ENCODE measurements at regions of chr18 and their contacts with region 1.

Region 1: DNA sequence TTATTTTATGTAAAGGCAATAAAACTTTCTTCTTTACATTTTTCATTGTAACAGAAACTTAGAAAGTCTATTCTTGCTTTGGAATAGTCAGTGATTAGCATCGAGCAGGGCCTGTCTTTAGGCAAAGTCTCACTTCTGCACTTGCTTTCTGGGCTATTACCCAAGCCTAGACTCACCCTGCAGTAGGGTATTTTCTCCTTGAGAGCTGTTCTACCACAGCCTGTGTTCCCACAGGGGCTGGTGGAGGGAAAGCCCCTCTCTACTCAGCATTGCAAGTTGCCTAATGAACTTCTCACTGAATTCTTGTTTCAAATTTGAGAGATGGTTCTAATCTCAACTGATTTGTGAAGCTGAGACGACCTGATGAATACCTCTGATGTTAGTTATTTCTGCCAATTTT is 111.7 kb upstream of the KLHL14 start:
- DNase-seq: peak; percentile 87
- ATAC-seq: peak; percentile 99
- H3K4me3 ChIP-seq: no peak overlapping the region
- H3K4me3 Mint-ChIP-seq: peak overlapping the region; percentile 71
- H3K27ac ChIP-seq: peak overlapping the region; percentile 78 to 79
- H3K27ac Mint-ChIP-seq: peak overlapping the region; percentile 88
- H3K4me1 ChIP-seq: peaks cover 68 to 70% of the 10 kb centered on the region in 2 donors
- H3K4me1 Mint-ChIP-seq: peaks cover 76% of the 10 kb centered on the region
- H3K27me3 ChIP-seq: no peaks in the 10 kb centered on the region
- H3K27me3 Mint-ChIP-seq: no peaks in the 10 kb centered on the region
- CTCF ChIP-seq: no peak

Region 2: DNA sequence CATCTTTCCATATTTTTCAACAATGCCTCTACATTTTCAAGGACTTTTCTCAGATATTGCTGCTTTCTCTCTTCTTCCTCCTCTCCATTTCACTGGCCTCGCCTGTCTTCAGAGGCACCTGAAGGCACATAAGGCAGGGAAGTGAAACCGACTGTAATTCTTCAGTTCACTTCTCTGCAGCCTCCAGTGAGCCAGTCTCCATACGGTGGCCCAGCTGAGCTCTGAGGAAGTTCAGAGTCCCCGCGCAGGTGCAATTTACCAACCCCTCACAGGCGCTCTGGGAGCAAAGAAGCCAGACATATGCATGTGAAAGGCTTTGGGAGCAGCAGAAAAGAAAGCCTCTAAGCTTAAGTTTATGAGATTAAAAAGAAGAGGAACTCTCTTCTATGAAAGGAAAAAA is 124.2 kb before region 1 on chr18:
- CTCF ChIA-PET with region 1: no interaction called
- POLR2A ChIA-PET with region 1: no interaction called
- intact Hi-C with region 1: loop called (anchors 1 kb)
- DNase-seq: peak; percentile 91
- ATAC-seq: peak; percentile 99
- H3K4me3 ChIP-seq: peak overlapping the region in 2 of 5 experiments; percentile 20 to 34
- H3K4me3 Mint-ChIP-seq: peak overlapping the region; percentile 52
- H3K27ac ChIP-seq: peak overlapping the region; percentile 76 to 81
- H3K27ac Mint-ChIP-seq: peak overlapping the region; percentile 81
- H3K4me1 ChIP-seq: peaks cover 60 to 91% of the 10 kb centered on the region in 2 donors
- H3K4me1 Mint-ChIP-seq: peaks cover 84% of the 10 kb centered on the region
- H3K27me3 ChIP-seq: no peaks in the 10 kb centered on the region
- H3K27me3 Mint-ChIP-seq: no peaks in the 10 kb centered on the region
- CTCF ChIP-seq: no peak

Region 3: DNA sequence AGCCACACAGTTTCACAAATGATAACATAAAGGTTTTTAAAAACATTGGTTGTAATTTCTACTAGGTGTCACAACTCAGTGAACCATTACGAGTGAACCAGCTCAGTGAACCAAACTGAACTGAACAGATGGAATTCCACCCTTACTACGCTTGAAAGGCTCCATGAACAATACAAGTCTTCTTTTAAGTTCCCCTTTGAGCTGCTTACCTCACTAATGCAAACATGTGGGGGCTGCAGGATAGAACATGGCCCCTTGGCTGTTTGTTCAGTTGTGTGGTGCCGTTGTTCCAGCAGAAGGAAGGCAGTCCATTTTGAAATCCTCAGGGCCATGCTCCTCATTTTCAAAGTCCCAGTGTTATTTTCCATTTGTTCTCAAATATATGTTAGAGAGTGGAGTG is 81.0 kb before region 1 on chr18:
- CTCF ChIA-PET with region 1: interaction called, 5 read pairs
- POLR2A ChIA-PET with region 1: no interaction called
- intact Hi-C with region 1: loop called (anchors 1 kb)
- DNase-seq: peak; percentile 84
- ATAC-seq: peak; percentile 91
- H3K4me3 ChIP-seq: peak overlapping the region in 2 of 5 experiments; percentile 37 to 43
- H3K4me3 Mint-ChIP-seq: peak overlapping the region; percentile 80
- H3K27ac ChIP-seq: peak overlapping the region; percentile 88 to 91
- H3K27ac Mint-ChIP-seq: peak overlapping the region; percentile 96
- H3K4me1 ChIP-seq: peaks cover 43 to 46% of the 10 kb centered on the region in 2 donors
- H3K4me1 Mint-ChIP-seq: peaks cover 53% of the 10 kb centered on the region
- H3K27me3 ChIP-seq: no peaks in the 10 kb centered on the region
- H3K27me3 Mint-ChIP-seq: no peaks in the 10 kb centered on the region
- CTCF ChIP-seq: no peak

Region 4: DNA sequence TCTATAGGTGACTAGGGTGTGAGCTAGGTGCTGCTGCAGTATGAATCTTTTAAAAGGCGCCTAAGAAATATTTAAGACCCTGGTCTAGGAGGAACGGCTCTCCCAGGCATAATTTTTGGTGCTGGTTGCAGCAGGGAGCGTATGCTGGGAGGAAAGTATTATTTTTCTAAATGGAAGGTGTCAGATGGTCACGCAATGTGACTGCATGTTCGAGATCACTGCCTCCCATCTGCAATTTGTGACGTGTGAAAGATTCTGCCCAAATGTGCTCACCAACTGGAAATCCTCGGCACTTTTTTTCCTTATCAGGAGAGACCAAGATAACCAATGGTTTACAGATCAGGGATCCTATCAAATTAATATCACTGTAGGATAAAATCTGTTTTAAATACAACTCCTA is 16.1 kb before region 1 on chr18:
- CTCF ChIA-PET with region 1: interaction called, 14 read pairs
- POLR2A ChIA-PET with region 1: no interaction called
- intact Hi-C with region 1: loop called (anchors 1 kb)
- DNase-seq: peak; percentile 72
- ATAC-seq: peak; percentile 56
- H3K4me3 ChIP-seq: peak overlapping the region in 2 of 5 experiments; percentile 32 to 57
- H3K4me3 Mint-ChIP-seq: peak overlapping the region; percentile 69
- H3K27ac ChIP-seq: peak overlapping the region; percentile 88 to 90
- H3K27ac Mint-ChIP-seq: peak overlapping the region; percentile 86
- H3K4me1 ChIP-seq: peaks cover 69 to 74% of the 10 kb centered on the region in 2 donors
- H3K4me1 Mint-ChIP-seq: peaks cover 76% of the 10 kb centered on the region
- H3K27me3 ChIP-seq: no peaks in the 10 kb centered on the region
- H3K27me3 Mint-ChIP-seq: no peaks in the 10 kb centered on the region
- CTCF ChIP-seq: no peak

Region 5: DNA sequence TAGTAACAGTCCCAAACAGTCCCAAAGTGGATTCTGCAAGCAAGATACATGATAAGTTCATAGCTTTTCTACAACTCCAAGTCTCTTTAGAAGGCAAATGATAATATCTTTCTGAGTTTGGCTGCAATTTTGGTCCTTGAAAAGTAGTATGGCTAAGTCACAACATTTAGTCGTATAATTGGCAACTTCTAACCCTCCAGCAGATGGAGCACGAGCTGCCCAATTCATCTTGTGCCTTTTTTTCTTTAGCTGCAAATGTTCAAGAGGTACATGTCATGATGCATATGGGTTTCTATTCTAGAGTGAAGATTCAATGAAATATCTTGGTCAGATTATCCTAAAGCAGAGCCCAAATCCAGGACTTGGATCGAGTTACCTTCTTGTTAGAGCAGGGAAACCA is 15.3 kb after region 1 on chr18:
- CTCF ChIA-PET with region 1: interaction called, 3 read pairs
- POLR2A ChIA-PET with region 1: no interaction called
- intact Hi-C with region 1: loop called (anchors 2 kb)
- DNase-seq: no peak
- ATAC-seq: no peak
- H3K4me3 ChIP-seq: no peak overlapping the region
- H3K4me3 Mint-ChIP-seq: no peak overlapping the region
- H3K27ac ChIP-seq: no peak overlapping the region
- H3K27ac Mint-ChIP-seq: no peak overlapping the region
- H3K4me1 ChIP-seq: peaks cover 15 to 19% of the 10 kb centered on the region in 2 donors
- H3K4me1 Mint-ChIP-seq: peaks cover 25% of the 10 kb centered on the region
- H3K27me3 ChIP-seq: no peaks in the 10 kb centered on the region
- H3K27me3 Mint-ChIP-seq: no peaks in the 10 kb centered on the region
- CTCF ChIP-seq: no peak

Region 6: DNA sequence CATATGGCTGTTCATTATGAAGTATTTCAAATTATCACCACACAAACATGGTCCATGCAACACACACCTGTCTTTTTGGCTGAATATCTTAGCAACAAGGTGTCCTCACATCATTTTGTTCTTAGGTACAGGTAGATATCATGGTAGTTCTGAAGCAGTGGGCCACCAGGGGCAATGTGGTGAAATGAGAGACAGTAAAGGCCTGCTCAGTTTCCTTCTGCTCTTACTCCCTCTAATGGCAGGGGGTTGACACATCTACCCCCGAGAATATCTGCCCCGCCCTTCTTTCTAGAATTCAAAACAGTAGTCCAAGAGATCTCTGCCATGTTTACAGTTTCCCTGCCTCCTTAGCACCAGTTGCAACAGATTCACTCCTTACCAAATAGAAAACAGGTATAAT is 35.3 kb after region 1 on chr18:
- CTCF ChIA-PET with region 1: no interaction called
- POLR2A ChIA-PET with region 1: no interaction called
- intact Hi-C with region 1: loop called (anchors 5 kb)
- DNase-seq: peak; percentile 87
- ATAC-seq: peak; percentile 99
- H3K4me3 ChIP-seq: no peak overlapping the region
- H3K4me3 Mint-ChIP-seq: peak overlapping the region; percentile 49
- H3K27ac ChIP-seq: peak overlapping the region in 1 of 2 donors; percentile 24
- H3K27ac Mint-ChIP-seq: no peak overlapping the region
- H3K4me1 ChIP-seq: peaks cover 43 to 52% of the 10 kb centered on the region in 2 donors
- H3K4me1 Mint-ChIP-seq: peaks cover 44% of the 10 kb centered on the region
- H3K27me3 ChIP-seq: no peaks in the 10 kb centered on the region
- H3K27me3 Mint-ChIP-seq: no peaks in the 10 kb centered on the region
- CTCF ChIP-seq: peak; percentile 97

Region 7: GRCh38 chr18:33034945-33035344 is 150.4 kb after region 1 on chr18:
- CTCF ChIA-PET with region 1: no interaction called
- POLR2A ChIA-PET with region 1: no interaction called
- intact Hi-C with region 1: no loop called
- DNase-seq: no peak
- ATAC-seq: no peak
- H3K4me3 ChIP-seq: no peak overlapping the region
- H3K4me3 Mint-ChIP-seq: no peak overlapping the region
- H3K27ac ChIP-seq: no peak overlapping the region
- H3K27ac Mint-ChIP-seq: no peak overlapping the region
- H3K4me1 ChIP-seq: no peaks in the 10 kb centered on the region
- H3K4me1 Mint-ChIP-seq: no peaks in the 10 kb centered on the region
- H3K27me3 ChIP-seq: peaks cover 0 to 2% (median 0%) of the 10 kb centered on the region in 4 experiments
- H3K27me3 Mint-ChIP-seq: no peaks in the 10 kb centered on the region
- CTCF ChIP-seq: no peak

Measured in B cell (primary cell).